Panc1 (cell line): ENCODE measurements at regions of chr3 and their contacts with region 1.

Region 1: GRCh38 chr3:33372218-33373081 is 67.8 kb downstream of the UBP1 start:
- DNase-seq: peak; percentile 46
- ATAC-seq: peak; percentile 76
- H3K4me3 ChIP-seq: no peak overlapping the region
- H3K27ac ChIP-seq: no peak overlapping the region
- H3K4me1 ChIP-seq: no peaks in the 10 kb centered on the region; the same call in 1 of the 2 replicates
- H3K27me3 ChIP-seq: no peaks in the 10 kb centered on the region
- CTCF ChIP-seq: peak; percentile 87

Region 2: DNA sequence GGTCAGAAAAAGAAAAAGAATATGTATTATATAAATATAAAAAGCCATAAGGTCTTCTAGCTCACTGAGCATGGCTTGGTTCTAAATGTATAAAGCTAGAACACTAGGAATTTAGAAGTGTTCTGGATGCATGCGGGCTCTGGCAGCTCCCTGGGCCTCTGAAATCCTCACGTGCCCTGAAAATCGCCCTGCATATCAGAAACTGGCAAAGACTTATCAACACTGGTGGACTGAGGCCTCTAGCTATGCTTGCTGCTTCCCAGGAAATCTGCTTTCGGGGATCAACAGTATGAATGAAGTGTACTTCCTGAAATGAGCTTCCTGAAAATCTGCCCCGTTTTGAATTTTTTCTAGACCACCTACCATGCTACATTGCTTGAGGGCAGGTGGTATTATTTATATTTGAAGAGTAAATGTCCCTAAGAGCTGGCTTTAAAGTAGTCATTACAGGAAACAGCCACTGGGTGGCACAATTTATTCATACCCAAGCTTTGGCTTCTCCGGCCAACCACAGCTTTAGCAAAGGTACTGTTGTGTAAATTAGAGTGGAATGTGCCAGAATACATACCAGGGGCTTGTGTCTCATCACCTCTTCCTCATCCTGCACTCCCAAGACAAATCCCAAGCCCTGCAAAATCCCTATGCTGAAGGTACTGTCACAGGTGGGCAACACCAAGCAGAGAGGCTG is 241.0 kb before region 1 on chr3:
- CTCF ChIA-PET with region 1: interaction called, 47 read pairs
- POLR2A ChIA-PET with region 1: no interaction called
- in situ Hi-C with region 1: no loop called
- intact Hi-C with region 1: loop called (anchors 1 kb)
- DNase-seq: no peak
- ATAC-seq: peak; percentile 87
- H3K4me3 ChIP-seq: no peak overlapping the region
- H3K27ac ChIP-seq: no peak overlapping the region
- H3K4me1 ChIP-seq: no peaks in the 10 kb centered on the region
- H3K27me3 ChIP-seq: no peaks in the 10 kb centered on the region
- CTCF ChIP-seq: peak; percentile 77